Activated B cell treated with CpG ODN at 0.5 μM for 24 hours (primary cell): ENCODE measurements at regions of chr5 and their contacts with region 1.

Region 1: DNA sequence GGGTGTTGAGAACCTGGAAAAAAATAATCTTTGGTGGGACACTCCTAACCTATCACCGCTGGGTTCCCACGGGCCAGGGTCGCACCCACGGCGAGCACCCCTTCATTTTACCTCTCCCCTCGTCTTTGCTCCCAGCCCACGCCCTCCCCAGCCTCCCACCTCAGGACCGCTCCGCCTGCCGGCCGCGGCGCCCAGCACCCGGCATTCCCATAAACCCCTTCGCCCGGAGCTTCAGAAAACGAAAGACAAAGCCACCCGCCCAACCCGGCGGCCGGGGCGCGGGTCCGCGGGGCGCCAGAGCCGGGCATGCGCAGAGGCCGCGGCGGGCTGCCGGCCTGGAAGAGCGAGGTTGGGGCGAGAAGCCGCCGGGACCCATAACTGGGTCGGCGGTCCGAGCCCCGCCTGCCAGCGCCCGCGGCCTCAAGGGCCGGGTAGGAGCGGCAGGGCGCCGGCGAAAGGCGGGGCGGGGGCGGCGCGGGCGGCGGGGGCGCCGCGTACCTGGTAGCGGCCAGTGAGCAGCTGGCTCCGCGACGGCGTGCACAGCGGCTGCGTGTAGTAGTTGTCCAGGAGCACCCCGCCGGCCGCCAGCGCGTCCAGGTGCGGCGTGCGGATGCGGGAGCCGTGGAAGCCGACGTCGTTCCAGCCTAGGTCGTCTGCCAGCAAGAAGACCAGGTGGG is 533 bp downstream of the ARSB start:
- DNase-seq: peak; percentile 83
- ATAC-seq: peak; percentile 55
- H3K4me3 Mint-ChIP-seq: peak overlapping the region; percentile 90
- H3K27ac Mint-ChIP-seq: peak overlapping the region; percentile 91
- H3K4me1 Mint-ChIP-seq: peaks cover 46% of the 10 kb centered on the region
- H3K27me3 Mint-ChIP-seq: no peaks in the 10 kb centered on the region
- CTCF ChIP-seq: no peak

Region 2: GRCh38 chr5:77775790-77776553 is 1208.6 kb before region 1 on chr5 and contains the start of gene TBCA:
- CTCF ChIA-PET with region 1: no interaction called
- POLR2A ChIA-PET with region 1: no interaction called
- intact Hi-C with region 1: loop called (anchors 5 kb)
- DNase-seq: peak; percentile 96
- ATAC-seq: peak; percentile 89
- H3K4me3 Mint-ChIP-seq: peak within 1 kb of the TSS; percentile 95
- H3K27ac Mint-ChIP-seq: peak within 1 kb of the TSS; percentile 93
- H3K4me1 Mint-ChIP-seq: peaks cover 44% of the 10 kb centered on the region
- H3K27me3 Mint-ChIP-seq: no peaks in the 10 kb centered on the region
- CTCF ChIP-seq: no peak
- total RNA-seq, gene TBCA: 113 and 128 TPM in 2 replicates

Region 3: GRCh38 chr5:78294248-78295034 is 690.1 kb before region 1 on chr5 and contains the start of gene AP3B1:
- CTCF ChIA-PET with region 1: no interaction called
- POLR2A ChIA-PET with region 1: interaction called, 9 read pairs
- intact Hi-C with region 1: loop called (anchors 1 kb)
- DNase-seq: peak; percentile 96
- ATAC-seq: peak; percentile 94
- H3K4me3 Mint-ChIP-seq: peak within 1 kb of the TSS; percentile 98
- H3K27ac Mint-ChIP-seq: peak within 1 kb of the TSS; percentile 98
- H3K4me1 Mint-ChIP-seq: peaks cover 44% of the 10 kb centered on the region
- H3K27me3 Mint-ChIP-seq: no peaks in the 10 kb centered on the region
- CTCF ChIP-seq: no peak
- total RNA-seq, gene AP3B1: 46.8 and 52.9 TPM in 2 replicates

Region 4: GRCh38 chr5:78727786-78728761 is 256.5 kb before region 1 on chr5:
- CTCF ChIA-PET with region 1: no interaction called
- POLR2A ChIA-PET with region 1: interaction called, 8 read pairs
- intact Hi-C with region 1: loop called (anchors 2 kb)
- DNase-seq: no peak
- ATAC-seq: peak; percentile 87
- H3K4me3 Mint-ChIP-seq: peak overlapping the region; percentile 62
- H3K27ac Mint-ChIP-seq: peak overlapping the region; percentile 87
- H3K4me1 Mint-ChIP-seq: peaks cover 78% of the 10 kb centered on the region
- H3K27me3 Mint-ChIP-seq: no peaks in the 10 kb centered on the region
- CTCF ChIP-seq: no peak

Region 5: GRCh38 chr5:78747705-78748359 is 236.7 kb before region 1 on chr5:
- CTCF ChIA-PET with region 1: no interaction called
- POLR2A ChIA-PET with region 1: no interaction called
- intact Hi-C with region 1: no loop called
- DNase-seq: no peak
- ATAC-seq: no peak
- H3K4me3 Mint-ChIP-seq: no peak overlapping the region
- H3K27ac Mint-ChIP-seq: no peak overlapping the region
- H3K4me1 Mint-ChIP-seq: no peaks in the 10 kb centered on the region
- H3K27me3 Mint-ChIP-seq: no peaks in the 10 kb centered on the region
- CTCF ChIP-seq: no peak

Region 6: GRCh38 chr5:79020861-79021561 is 36.4 kb after region 1 on chr5:
- CTCF ChIA-PET with region 1: interaction called, 7 read pairs
- POLR2A ChIA-PET with region 1: interaction called, 16 read pairs
- intact Hi-C with region 1: loop called (anchors 2 kb)
- DNase-seq: no peak
- ATAC-seq: peak; percentile 66
- H3K4me3 Mint-ChIP-seq: no peak overlapping the region
- H3K27ac Mint-ChIP-seq: no peak overlapping the region
- H3K4me1 Mint-ChIP-seq: peaks cover 17% of the 10 kb centered on the region
- H3K27me3 Mint-ChIP-seq: peaks cover 50% of the 10 kb centered on the region
- CTCF ChIP-seq: no peak

Region 7: DNA sequence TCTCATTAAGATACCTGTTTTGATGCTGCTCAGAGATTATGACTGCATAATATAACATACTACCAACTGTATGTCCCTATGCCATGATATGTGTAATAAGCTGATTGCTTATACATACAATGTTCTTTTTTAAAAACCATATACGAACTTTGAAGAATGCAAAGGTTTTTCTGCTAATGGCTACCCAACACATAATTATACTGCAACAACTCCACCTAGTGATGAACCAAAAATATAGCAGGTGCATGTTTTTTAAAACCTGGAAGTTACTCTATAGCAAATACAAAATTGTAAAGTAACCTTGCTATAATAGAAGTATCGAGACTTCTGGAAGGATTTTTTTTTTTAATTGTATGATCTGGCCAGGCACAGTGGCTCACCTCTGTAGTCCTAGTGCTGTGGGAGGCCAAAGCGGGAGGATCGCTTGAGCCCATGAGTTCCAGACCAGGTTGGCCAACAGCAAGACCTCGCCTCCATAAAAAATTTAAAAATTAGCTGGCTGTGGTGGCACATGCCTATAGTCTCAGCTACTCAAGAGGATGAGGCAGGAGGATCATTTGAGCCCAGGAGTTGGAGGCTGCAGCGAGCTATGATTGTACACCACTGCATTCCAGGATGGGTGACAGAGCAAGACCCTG is 480.2 kb after region 1 on chr5:
- CTCF ChIA-PET with region 1: no interaction called
- POLR2A ChIA-PET with region 1: no interaction called
- intact Hi-C with region 1: loop called (anchors 2 kb)
- DNase-seq: no peak
- ATAC-seq: no peak
- H3K4me3 Mint-ChIP-seq: no peak overlapping the region
- H3K27ac Mint-ChIP-seq: no peak overlapping the region
- H3K4me1 Mint-ChIP-seq: no peaks in the 10 kb centered on the region
- H3K27me3 Mint-ChIP-seq: peaks cover 1% of the 10 kb centered on the region
- CTCF ChIP-seq: no peak

Region 8: GRCh38 chr5:80407735-80408482 is 1423.3 kb after region 1 on chr5 and contains the start of gene ZFYVE16:
- CTCF ChIA-PET with region 1: no interaction called
- POLR2A ChIA-PET with region 1: no interaction called
- intact Hi-C with region 1: loop called (anchors 10 kb)
- DNase-seq: peak; percentile 95
- ATAC-seq: peak; percentile 84
- H3K4me3 Mint-ChIP-seq: peak within 1 kb of the TSS; percentile 91
- H3K27ac Mint-ChIP-seq: peak within 1 kb of the TSS; percentile 95
- H3K4me1 Mint-ChIP-seq: peaks cover 17% of the 10 kb centered on the region
- H3K27me3 Mint-ChIP-seq: no peaks in the 10 kb centered on the region
- CTCF ChIP-seq: no peak
- total RNA-seq, gene ZFYVE16: 19.8 and 21.1 TPM in 2 replicates